Psoas muscle (tissue), 8 donors: ENCODE measurements at regions of chr7 and their contacts with region 1.

Region 1: GRCh38 chr7:126803060-126803665 is 449.6 kb downstream of the GRM8 start:
- DNase-seq: no peak
- ATAC-seq: peak in 2 of 4 donors; percentile 42 to 43
- H3K4me3 ChIP-seq: no peak overlapping the region
- H3K27ac ChIP-seq: no peak overlapping the region
- H3K4me1 ChIP-seq: no peaks in the 10 kb centered on the region
- H3K27me3 ChIP-seq: no peaks in the 10 kb centered on the region
- CTCF ChIP-seq: peak; percentile 55

Region 2: GRCh38 chr7:127253281-127254162 is 450.4 kb after region 1 on chr7:
- intact Hi-C with region 1: loop called in 1 of 2 experiments (anchors 2 kb)
- DNase-seq: peak; percentile 68 to 73
- ATAC-seq: peak; percentile 80 to 94 (median 88)
- H3K4me3 ChIP-seq: peak overlapping the region; percentile 83
- H3K27ac ChIP-seq: no peak overlapping the region
- H3K4me1 ChIP-seq: peaks cover 9% of the 10 kb centered on the region
- H3K27me3 ChIP-seq: peaks cover 0 to 58% (median 10%) of the 10 kb centered on the region in 3 donors
- CTCF ChIP-seq: peak; percentile 89

Region 3: DNA sequence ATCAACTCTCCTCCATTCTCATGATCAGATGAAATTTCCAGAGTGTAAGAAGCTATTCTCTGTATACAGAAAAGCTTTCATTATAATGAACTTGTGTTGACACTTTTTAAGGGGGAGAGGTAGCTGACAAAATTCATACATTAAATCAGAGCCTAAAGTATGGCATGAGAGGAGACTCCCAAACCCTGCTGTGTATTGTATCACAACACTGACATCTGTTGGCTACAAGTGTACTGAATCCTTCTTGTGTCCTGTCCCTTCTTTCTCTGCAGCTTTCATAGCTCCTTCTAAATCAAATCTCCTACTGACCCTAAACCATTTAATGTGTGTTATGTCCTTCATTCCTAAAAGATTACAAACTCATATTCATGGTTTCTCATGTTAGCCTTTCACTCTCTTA is 711.3 kb after region 1 on chr7:
- intact Hi-C with region 1: loop called in 1 of 2 experiments (anchors 5 kb)
- DNase-seq: no peak
- ATAC-seq: no peak
- H3K4me3 ChIP-seq: no peak overlapping the region
- H3K27ac ChIP-seq: no peak overlapping the region
- H3K4me1 ChIP-seq: no peaks in the 10 kb centered on the region
- H3K27me3 ChIP-seq: peaks cover 0 to 5% (median 0%) of the 10 kb centered on the region in 3 donors
- CTCF ChIP-seq: peak; percentile 39